Activated CD4-positive, alpha-beta memory T cell treated with anti-CD3 and anti-CD28 coated beads for 36 hours (primary cell): ENCODE measurements at regions of chr11 and their contacts with region 1.

Region 1: GRCh38 chr11:14249121-14249963 is 109.6 kb downstream of the RRAS2 start:
- DNase-seq: peak; percentile 78
- H3K4me3 Mint-ChIP-seq: no peak overlapping the region
- H3K27ac Mint-ChIP-seq: no peak overlapping the region
- H3K4me1 Mint-ChIP-seq: peaks cover 19% of the 10 kb centered on the region
- H3K27me3 Mint-ChIP-seq: no peaks in the 10 kb centered on the region

Region 2: GRCh38 chr11:13955971-13956421 is 293.3 kb before region 1 on chr11:
- CTCF ChIA-PET with region 1: interaction called, 77 read pairs
- POLR2A ChIA-PET with region 1: no interaction called
- intact Hi-C with region 1: loop called (anchors 1 kb)
- DNase-seq: peak; percentile 54
- H3K4me3 Mint-ChIP-seq: no peak overlapping the region
- H3K27ac Mint-ChIP-seq: no peak overlapping the region
- H3K4me1 Mint-ChIP-seq: no peaks in the 10 kb centered on the region
- H3K27me3 Mint-ChIP-seq: peaks cover 3% of the 10 kb centered on the region

Region 3: GRCh38 chr11:14336507-14337503 is 87.5 kb after region 1 on chr11:
- CTCF ChIA-PET with region 1: no interaction called
- POLR2A ChIA-PET with region 1: no interaction called
- intact Hi-C with region 1: no loop called
- DNase-seq: no peak
- H3K4me3 Mint-ChIP-seq: no peak overlapping the region
- H3K27ac Mint-ChIP-seq: peak overlapping the region; percentile 67
- H3K4me1 Mint-ChIP-seq: peaks cover 51% of the 10 kb centered on the region
- H3K27me3 Mint-ChIP-seq: no peaks in the 10 kb centered on the region